ENCODE measurements at regions of chr6 and their contacts with region 1.

Region 1: DNA sequence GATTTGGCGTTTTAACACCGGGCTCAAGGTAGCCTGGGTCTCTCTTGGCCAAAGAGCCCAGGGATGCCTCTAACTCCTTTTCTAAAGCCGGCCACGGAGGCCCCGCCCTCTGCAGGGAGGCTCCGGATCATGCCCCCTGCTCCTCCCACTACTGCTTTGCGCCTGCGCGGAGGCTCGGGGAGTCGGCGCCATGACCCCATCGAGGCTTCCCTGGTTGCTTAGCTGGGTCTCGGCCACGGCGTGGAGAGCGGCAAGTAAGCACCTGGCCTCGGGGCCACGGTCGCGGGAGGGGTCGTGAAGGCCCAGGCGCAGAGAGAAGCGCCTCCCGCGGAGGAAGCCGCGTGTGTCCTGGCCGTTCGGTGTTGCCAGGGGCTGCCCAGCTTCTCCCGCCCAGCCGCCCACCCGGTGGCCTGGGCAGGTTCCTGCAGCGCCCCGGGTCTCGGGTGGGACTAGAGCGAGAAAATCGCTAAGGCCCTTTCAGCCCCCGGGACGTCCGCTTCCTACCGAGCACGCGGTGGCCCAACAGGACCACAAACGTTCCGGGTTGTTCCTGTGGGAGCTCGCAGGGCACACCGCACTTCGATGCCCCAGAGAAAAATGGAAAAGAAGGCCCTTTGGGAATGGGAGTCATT is at the start of gene SDHAF4:
- DNase-seq: peak; percentile 86
- ATAC-seq: peak; percentile 98
- H3K4me3 ChIP-seq: peak within 1 kb of the TSS; percentile 69 to 84 (median 83)
- H3K27ac ChIP-seq: peak within 1 kb of the TSS; percentile 80
- H3K4me1 ChIP-seq: peaks cover 35% of the 10 kb centered on the region
- H3K27me3 ChIP-seq: no peaks in the 10 kb centered on the region
- CTCF ChIP-seq: peak; percentile 28; the same call in 1 of the 2 replicates
- EP300 ChIP-seq: no peak
- POLR2A ChIP-seq: peak; percentile 83 to 97
- RAD21 ChIP-seq: peak; percentile 49; the same call in 1 of the 2 replicates
- total RNA-seq, gene SDHAF4: 7.1 and 7.5 TPM in 2 replicates

Region 2: GRCh38 chr6:70413114-70413991 is 153.5 kb before region 1 on chr6 and contains the start of gene FAM135A:
- CTCF ChIA-PET with region 1: no interaction called
- POLR2A ChIA-PET with region 1: interaction called, 11 read pairs
- in situ Hi-C with region 1: no loop called
- intact Hi-C with region 1: no loop called
- DNase-seq: peak; percentile 97
- ATAC-seq: peak; percentile 95
- H3K4me3 ChIP-seq: peak within 1 kb of the TSS; percentile 90 to 100 (median 94)
- H3K27ac ChIP-seq: peak within 1 kb of the TSS; percentile 72
- H3K4me1 ChIP-seq: peaks cover 40% of the 10 kb centered on the region
- H3K27me3 ChIP-seq: no peaks in the 10 kb centered on the region; a peak in 1 of 5 replicates
- CTCF ChIP-seq: no peak
- EP300 ChIP-seq: peak in 1 of 2 experiments; percentile 19; a peak in 1 of 4 replicates
- POLR2A ChIP-seq: peak; percentile 77 to 98
- RAD21 ChIP-seq: no peak
- total RNA-seq, gene FAM135A: 26.9 and 32.9 TPM in 2 replicates

Region 3: DNA sequence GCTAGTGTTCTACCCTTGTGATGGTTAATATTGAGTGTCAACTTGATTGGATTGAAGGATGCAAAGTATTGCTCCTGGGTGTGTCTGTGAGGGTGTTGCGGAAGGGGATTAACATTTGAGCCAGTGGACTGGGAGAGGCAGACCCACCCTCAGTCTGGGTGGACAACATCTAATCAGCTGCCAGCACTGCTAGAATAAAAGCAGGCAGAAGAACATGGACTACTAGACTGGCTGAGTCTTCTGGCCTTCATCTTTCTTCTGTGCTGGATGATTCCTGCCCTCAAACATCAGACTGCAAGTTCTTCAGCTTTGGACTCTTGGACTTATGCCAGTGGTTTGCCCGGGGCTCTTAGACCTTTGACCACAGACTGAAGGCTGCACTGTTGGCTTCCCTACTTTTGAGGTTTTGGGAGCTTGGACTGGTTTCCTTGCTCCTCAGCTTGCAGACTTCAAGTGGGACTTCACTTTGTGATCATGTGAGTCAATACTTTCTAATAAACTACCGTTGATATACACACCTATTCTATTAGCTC is 49.9 kb after region 1 on chr6:
- CTCF ChIA-PET with region 1: no interaction called
- POLR2A ChIA-PET with region 1: no interaction called
- in situ Hi-C with region 1: no loop called
- intact Hi-C with region 1: no loop called
- DNase-seq: peak; percentile 15
- ATAC-seq: no peak
- H3K4me3 ChIP-seq: no peak overlapping the region
- H3K27ac ChIP-seq: no peak overlapping the region
- H3K4me1 ChIP-seq: peaks cover 7% of the 10 kb centered on the region; the same call in 1 of the 2 replicates
- H3K27me3 ChIP-seq: no peaks in the 10 kb centered on the region
- CTCF ChIP-seq: no peak
- EP300 ChIP-seq: no peak
- POLR2A ChIP-seq: no peak
- RAD21 ChIP-seq: no peak

Region 4: GRCh38 chr6:70667711-70668498 is 101.0 kb after region 1 on chr6 and contains the start of gene SMAP1:
- CTCF ChIA-PET with region 1: no interaction called
- POLR2A ChIA-PET with region 1: interaction called, 13 read pairs
- in situ Hi-C with region 1: no loop called
- intact Hi-C with region 1: loop called (anchors 5 kb)
- DNase-seq: peak; percentile 78
- ATAC-seq: peak; percentile 93
- H3K4me3 ChIP-seq: peak within 1 kb of the TSS; percentile 82 to 99 (median 83)
- H3K27ac ChIP-seq: peak within 1 kb of the TSS; percentile 87
- H3K4me1 ChIP-seq: peaks cover 46% of the 10 kb centered on the region
- H3K27me3 ChIP-seq: no peaks in the 10 kb centered on the region
- CTCF ChIP-seq: peak; percentile 21; the same call in 1 of the 2 replicates
- EP300 ChIP-seq: no peak
- POLR2A ChIP-seq: peak; percentile 59 to 71
- RAD21 ChIP-seq: peak; percentile 40
- total RNA-seq, gene SMAP1: 13.4 and 16.1 TPM in 2 replicates